Panc1 (cell line): ENCODE measurements at regions of chr10 and their contacts with region 1.

Region 1: DNA sequence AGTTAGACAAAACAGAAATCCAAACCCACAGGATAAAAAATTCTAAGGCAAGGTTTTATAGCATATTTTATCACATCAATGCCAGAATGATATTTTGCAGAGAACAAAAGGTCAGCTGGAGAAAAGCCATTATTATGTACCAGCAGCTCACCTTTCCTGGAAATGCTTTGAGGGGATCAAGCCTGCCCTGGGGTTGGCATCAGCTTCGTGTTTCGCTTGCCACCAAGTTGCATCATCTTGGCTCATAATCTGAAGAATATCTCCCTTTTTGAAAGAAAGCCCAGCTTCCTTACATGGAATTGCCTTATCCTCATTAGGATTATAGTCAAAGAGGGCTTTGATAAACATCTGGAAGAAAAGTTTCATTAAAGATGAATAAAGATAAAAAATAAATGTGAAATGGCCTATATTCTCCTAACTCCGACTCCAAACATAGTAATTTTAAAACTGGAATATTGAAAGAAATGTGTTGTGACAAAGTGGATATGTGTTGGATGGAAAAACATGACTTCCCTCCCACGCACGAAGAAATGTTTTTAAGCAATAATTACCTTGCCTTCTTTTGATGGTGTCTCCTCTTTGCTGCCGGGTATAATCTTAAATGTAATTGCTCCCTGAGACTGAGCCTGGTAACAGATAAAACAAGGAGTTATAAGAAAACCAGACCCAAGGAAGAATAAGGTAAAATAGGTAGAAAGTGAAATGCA is 121.3 kb upstream of the ODAD2 start:
- DNase-seq: no peak
- ATAC-seq: no peak
- H3K4me3 ChIP-seq: no peak overlapping the region
- H3K27ac ChIP-seq: no peak overlapping the region
- H3K4me1 ChIP-seq: no peaks in the 10 kb centered on the region; the same call in 1 of the 2 replicates
- H3K27me3 ChIP-seq: no peaks in the 10 kb centered on the region
- CTCF ChIP-seq: no peak

Region 2: DNA sequence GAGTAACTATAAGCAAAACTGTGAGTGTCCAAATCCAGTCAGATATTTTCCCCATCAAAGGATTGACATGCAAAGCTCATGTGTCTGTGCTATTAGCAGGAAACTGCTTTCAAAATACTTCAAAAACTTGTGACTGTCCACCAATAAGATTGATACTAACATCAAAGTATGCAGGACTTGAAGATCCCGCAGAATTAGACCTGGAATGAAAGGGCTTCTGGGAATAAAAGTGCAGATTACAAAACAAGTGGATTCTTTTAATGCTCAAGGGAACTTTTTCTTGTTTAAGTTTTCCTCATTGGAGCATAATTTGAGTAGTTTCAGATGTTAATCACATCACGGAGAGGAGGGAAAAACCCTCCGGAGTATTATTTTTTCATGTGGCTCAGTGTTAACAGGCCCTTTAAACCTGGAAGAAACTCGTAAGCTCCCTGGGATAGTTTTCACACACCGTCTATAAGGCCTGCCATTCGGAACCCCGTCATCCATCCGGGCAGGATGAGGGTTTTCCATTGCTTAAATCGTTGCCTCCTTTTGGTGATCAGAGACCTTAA is 340.7 kb before region 1 on chr10:
- CTCF ChIA-PET with region 1: interaction called, 11 read pairs
- POLR2A ChIA-PET with region 1: no interaction called
- in situ Hi-C with region 1: no loop called
- intact Hi-C with region 1: no loop called
- DNase-seq: no peak
- ATAC-seq: no peak
- H3K4me3 ChIP-seq: no peak overlapping the region
- H3K27ac ChIP-seq: no peak overlapping the region
- H3K4me1 ChIP-seq: no peaks in the 10 kb centered on the region
- H3K27me3 ChIP-seq: no peaks in the 10 kb centered on the region
- CTCF ChIP-seq: no peak

Region 3: DNA sequence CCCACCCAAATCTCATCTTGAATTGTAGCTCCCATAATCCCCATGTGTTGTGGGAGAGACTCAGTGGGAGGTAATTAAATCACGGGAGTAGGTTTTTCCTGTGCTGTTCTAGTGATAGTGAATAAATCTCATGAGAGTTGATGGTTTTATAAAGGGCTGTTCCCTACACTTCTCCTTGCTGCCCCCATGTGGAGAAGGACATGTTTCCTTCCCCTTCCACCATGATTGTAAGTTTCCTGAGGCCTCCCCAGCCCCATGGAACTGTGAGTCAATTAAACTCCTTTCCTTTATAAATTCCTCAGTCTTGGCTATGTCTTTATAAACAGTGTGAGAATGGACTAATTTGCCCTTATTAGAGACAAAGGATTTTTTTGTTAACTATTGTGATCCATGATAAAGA is 326.0 kb before region 1 on chr10:
- CTCF ChIA-PET with region 1: no interaction called
- POLR2A ChIA-PET with region 1: no interaction called
- in situ Hi-C with region 1: no loop called
- intact Hi-C with region 1: no loop called
- DNase-seq: no peak
- ATAC-seq: no peak
- H3K4me3 ChIP-seq: no peak overlapping the region
- H3K27ac ChIP-seq: no peak overlapping the region
- H3K4me1 ChIP-seq: no peaks in the 10 kb centered on the region
- H3K27me3 ChIP-seq: no peaks in the 10 kb centered on the region
- CTCF ChIP-seq: peak; percentile 17; the same call in 1 of the 2 replicates

Region 4: GRCh38 chr10:27819781-27820531 is 300.2 kb before region 1 on chr10:
- CTCF ChIA-PET with region 1: no interaction called
- POLR2A ChIA-PET with region 1: interaction called, 10 read pairs
- in situ Hi-C with region 1: no loop called
- intact Hi-C with region 1: no loop called
- DNase-seq: no peak
- ATAC-seq: no peak
- H3K4me3 ChIP-seq: no peak overlapping the region
- H3K27ac ChIP-seq: no peak overlapping the region
- H3K4me1 ChIP-seq: no peaks in the 10 kb centered on the region
- H3K27me3 ChIP-seq: no peaks in the 10 kb centered on the region
- CTCF ChIP-seq: no peak

Region 5: DNA sequence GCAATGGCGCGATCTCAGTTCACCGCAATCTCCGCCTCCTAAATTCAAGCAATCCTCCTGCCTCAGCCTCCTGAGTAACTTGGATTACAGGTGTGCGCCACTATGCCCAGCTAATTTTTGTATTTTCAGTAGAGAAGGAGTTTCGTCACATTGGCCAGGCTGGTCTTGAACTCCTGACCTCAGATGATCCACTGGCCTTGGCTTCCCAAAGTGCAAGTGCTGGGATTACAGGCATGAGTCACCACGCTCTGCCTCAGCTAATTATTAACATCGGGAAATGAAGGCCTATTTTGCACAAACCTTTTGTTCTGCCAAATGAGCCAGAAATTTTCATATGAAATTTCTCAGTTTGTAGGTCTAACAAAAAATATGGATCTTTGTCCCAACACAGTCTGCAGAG is 14.6 kb before region 1 on chr10:
- CTCF ChIA-PET with region 1: no interaction called
- POLR2A ChIA-PET with region 1: no interaction called
- in situ Hi-C with region 1: no loop called
- intact Hi-C with region 1: no loop called
- DNase-seq: no peak
- ATAC-seq: no peak
- H3K4me3 ChIP-seq: no peak overlapping the region
- H3K27ac ChIP-seq: no peak overlapping the region
- H3K4me1 ChIP-seq: no peaks in the 10 kb centered on the region
- H3K27me3 ChIP-seq: no peaks in the 10 kb centered on the region
- CTCF ChIP-seq: no peak

Region 6: GRCh38 chr10:28355376-28355775 is 235.2 kb after region 1 on chr10:
- CTCF ChIA-PET with region 1: no interaction called
- POLR2A ChIA-PET with region 1: no interaction called
- in situ Hi-C with region 1: no loop called
- intact Hi-C with region 1: no loop called
- DNase-seq: no peak
- ATAC-seq: no peak
- H3K4me3 ChIP-seq: no peak overlapping the region
- H3K27ac ChIP-seq: no peak overlapping the region
- H3K4me1 ChIP-seq: no peaks in the 10 kb centered on the region
- H3K27me3 ChIP-seq: no peaks in the 10 kb centered on the region
- CTCF ChIP-seq: no peak

Region 7: DNA sequence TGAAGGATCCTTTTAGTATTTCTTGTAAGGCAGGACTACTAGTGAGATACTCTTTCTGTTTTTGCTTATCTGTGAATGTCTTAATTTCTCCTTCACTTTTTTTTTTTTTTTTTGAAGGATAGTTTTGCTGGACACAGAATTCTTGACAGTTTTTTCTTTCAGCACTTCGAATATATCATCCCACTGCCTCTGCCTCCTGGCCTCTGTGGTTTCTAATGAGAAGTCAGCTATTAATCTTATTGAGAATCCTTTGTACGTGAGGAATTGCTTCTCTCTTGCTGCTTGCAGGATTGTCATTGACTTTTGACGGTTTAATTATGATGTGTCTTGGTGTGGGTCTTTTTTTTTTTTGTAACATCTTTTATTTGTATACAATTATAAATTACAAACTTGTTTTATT is 400.1 kb after region 1 on chr10:
- CTCF ChIA-PET with region 1: no interaction called
- POLR2A ChIA-PET with region 1: no interaction called
- in situ Hi-C with region 1: no loop called
- intact Hi-C with region 1: no loop called
- DNase-seq: no peak
- ATAC-seq: no peak
- H3K4me3 ChIP-seq: no peak overlapping the region
- H3K27ac ChIP-seq: no peak overlapping the region
- H3K4me1 ChIP-seq: no peaks in the 10 kb centered on the region
- H3K27me3 ChIP-seq: no peaks in the 10 kb centered on the region
- CTCF ChIP-seq: no peak